Dendritic cell treated with granulocyte-macrophage colony-stimulating factor and Interleukin-4, amounts not matched to agents 40 ng/mL and 50 ng/mL, for 4 days (primary cell): ENCODE measurements at regions of chr1 and their contacts with region 1.

Region 1: GRCh38 chr1:167330601-167331293 is 110.1 kb downstream of the POU2F1 start:
- H3K4me3 Mint-ChIP-seq: no peak overlapping the region
- H3K27ac Mint-ChIP-seq: no peak overlapping the region
- H3K4me1 Mint-ChIP-seq: peaks cover 45% of the 10 kb centered on the region
- H3K27me3 Mint-ChIP-seq: no peaks in the 10 kb centered on the region

Region 2: DNA sequence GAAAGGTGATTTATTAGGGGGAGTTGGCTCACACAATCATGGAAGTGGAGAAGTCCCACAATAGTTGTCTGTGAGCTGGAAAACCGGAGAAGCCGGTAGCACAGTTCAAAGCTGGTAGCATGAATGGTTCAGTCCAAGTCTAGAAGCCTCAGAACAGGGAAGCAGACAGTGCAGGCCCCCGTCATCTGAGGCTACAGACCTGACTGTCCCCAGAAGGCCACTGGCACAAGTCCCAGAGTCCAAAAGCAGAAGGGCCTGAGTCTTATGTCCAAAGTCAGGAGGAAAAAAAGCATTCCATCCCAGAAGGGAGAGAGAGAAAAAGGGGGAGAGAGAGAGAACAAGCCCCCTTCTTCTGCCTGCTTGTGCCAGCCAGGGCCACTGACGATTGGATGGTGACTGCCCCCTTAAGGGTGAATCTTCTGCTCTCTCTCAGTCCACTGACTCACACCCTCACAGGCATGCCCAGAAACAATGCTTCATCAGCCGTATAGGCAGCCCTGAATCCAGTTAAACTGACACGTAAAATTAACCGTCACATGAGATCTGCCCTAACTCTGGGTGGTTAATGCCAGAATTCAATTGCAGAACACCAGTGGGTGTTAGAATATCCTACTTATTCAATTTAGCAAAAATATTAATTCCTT is 159.3 kb before region 1 on chr1:
- intact Hi-C with region 1: no loop called
- H3K4me3 Mint-ChIP-seq: no peak overlapping the region
- H3K27ac Mint-ChIP-seq: no peak overlapping the region
- H3K4me1 Mint-ChIP-seq: no peaks in the 10 kb centered on the region
- H3K27me3 Mint-ChIP-seq: peaks cover 4% of the 10 kb centered on the region

Region 3: DNA sequence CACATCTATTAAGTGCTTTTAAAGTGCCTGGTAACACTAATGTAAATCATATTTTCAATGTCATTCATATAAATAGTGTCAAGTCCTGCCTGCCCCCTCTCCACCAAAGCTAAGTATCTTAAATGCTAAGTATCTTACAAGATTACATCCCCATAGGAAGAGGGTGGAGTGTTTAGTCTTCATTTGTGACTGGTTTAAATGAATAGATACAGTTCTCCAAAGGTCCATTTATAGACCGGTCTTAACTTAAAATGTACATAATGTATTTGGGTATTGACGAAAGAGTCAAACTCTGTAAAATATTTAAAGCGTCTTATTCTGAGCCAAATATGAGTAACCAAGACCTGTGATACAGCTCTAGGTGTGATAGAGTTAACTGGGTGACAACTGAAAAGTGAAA is 49.8 kb before region 1 on chr1:
- intact Hi-C with region 1: loop called (anchors 5 kb)
- H3K4me3 Mint-ChIP-seq: no peak overlapping the region
- H3K27ac Mint-ChIP-seq: no peak overlapping the region
- H3K4me1 Mint-ChIP-seq: peaks cover 34% of the 10 kb centered on the region
- H3K27me3 Mint-ChIP-seq: no peaks in the 10 kb centered on the region

Region 4: DNA sequence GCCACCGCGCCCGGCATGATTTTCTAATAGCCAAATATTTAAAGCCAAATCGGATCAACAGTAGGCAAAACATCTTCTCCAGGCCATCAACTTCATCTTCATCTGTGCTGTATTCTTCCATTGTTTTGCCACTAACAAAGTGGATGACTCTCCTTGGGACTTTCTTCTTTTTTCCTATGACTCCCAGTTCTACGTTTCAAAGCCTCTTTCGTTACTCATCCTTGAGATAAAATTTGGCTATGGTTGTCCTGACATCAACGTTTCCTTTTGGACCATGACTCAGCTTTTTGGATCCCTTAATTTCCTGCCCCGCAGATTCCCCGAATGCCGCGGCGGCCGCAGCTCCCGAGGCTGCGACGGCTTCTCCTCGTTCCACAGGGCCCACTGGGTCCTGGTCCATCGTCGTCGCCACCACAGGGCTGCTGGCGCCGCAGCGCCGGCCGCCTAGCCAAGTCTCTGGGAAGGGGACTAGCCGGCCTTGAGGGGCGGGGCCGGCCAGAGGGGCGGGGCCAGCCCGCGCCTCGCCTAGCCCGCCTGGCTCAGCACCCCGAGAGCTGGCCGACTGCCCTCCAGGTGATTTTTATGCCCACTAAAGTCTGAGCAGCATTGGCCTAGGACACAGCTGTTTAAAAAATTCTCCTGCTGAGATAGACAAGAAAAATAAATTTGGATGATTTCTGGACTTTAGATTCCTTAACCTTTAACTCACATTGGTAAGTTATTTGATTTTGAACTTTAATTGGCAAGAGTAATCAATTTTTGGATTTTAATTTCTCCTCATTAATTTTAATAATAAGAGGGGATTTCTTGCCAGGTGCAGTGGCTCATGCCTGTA is 489.3 kb after region 1 on chr1:
- intact Hi-C with region 1: no loop called
- H3K4me3 Mint-ChIP-seq: peak overlapping the region; percentile 83
- H3K27ac Mint-ChIP-seq: peak overlapping the region; percentile 65
- H3K4me1 Mint-ChIP-seq: peaks cover 7% of the 10 kb centered on the region
- H3K27me3 Mint-ChIP-seq: peaks cover 8% of the 10 kb centered on the region